CD4-positive, alpha-beta memory T cell (primary cell): ENCODE measurements at regions of chr6 and their contacts with region 1.

Region 1: DNA sequence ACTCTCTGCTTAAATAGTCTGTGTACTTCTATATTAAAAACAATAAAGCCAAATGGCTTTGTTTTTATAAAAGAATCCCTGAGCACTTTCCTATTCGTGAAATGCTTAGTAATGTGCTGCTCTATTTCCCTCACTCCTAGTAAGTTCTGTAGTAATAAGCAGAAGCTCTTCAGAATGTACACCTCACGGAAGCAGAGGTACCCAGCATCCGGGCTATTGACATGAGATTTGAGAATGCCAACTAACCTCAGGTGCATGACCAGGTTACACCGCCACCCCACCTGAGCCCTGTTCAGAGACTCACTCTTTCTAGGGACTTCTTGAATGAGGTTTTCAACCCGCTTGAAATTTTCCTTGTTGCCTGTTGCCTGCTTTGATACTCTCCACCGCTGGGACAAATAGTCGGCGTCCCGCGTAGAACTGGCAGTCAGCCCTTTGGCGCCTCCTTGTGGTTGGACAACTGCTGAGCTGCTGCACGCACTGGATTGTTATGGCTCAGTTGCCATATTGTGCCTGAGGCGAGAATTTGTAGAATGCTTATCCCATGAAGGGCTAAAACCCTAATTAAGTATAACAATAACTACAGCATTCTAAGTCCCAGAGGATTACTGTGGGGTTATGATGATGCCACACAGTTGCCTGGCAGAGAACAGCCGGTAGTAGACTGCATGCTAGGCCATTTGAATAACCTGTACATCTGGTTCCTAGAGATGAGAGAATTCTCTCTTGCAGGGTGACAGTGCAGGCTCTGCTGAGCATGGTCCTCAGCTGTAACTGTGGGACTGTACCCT is 95.4 kb downstream of the KHDC1L start:
- DNase-seq: peak; percentile 64 to 72 (median 65)
- H3K4me3 ChIP-seq: no peak overlapping the region
- H3K4me3 Mint-ChIP-seq: peak overlapping the region; percentile 15 to 58 (median 38)
- H3K27ac ChIP-seq: no peak overlapping the region
- H3K27ac Mint-ChIP-seq: peak overlapping the region in 1 of 7 donors; percentile 57
- H3K4me1 ChIP-seq: no peaks in the 10 kb centered on the region
- H3K4me1 Mint-ChIP-seq: peaks cover 0 to 4% (median 2%) of the 10 kb centered on the region in 4 donors
- H3K27me3 ChIP-seq: no peaks in the 10 kb centered on the region
- H3K27me3 Mint-ChIP-seq: peaks cover 0 to 4% of the 10 kb centered on the region in 2 donors

Region 2: GRCh38 chr6:72411872-72412708 is 717.8 kb before region 1 on chr6:
- CTCF ChIA-PET with region 1: interaction called, 117 read pairs
- POLR2A ChIA-PET with region 1: no interaction called
- intact Hi-C with region 1: loop called (anchors 1 kb)
- DNase-seq: peak; percentile 65 to 85 (median 76)
- H3K4me3 ChIP-seq: no peak overlapping the region
- H3K4me3 Mint-ChIP-seq: no peak overlapping the region
- H3K27ac ChIP-seq: no peak overlapping the region
- H3K27ac Mint-ChIP-seq: no peak overlapping the region
- H3K4me1 ChIP-seq: no peaks in the 10 kb centered on the region
- H3K4me1 Mint-ChIP-seq: peaks cover 0 to 2% (median under 1%) of the 10 kb centered on the region in 4 donors
- H3K27me3 ChIP-seq: no peaks in the 10 kb centered on the region
- H3K27me3 Mint-ChIP-seq: peaks cover 3 to 7% of the 10 kb centered on the region in 2 donors

Region 3: DNA sequence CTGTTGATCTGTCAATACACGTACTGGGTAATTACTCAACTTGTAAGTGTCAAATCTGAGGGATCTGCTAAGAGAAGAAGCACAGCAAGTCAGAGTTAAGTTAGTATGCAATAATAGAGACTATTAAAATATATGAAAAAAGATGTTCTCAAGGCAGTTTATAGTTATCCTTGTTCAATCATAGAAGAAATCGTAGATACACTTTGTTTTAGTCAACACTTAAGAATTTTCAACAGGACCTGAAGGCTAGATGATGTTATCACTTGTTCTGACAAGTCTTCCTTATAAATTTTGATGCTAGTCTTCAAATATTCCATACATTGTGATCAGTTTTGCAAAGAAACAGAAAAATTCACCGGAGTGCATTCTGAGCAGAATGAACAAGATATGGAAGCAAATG is 599.1 kb before region 1 on chr6:
- CTCF ChIA-PET with region 1: no interaction called
- POLR2A ChIA-PET with region 1: no interaction called
- intact Hi-C with region 1: loop called (anchors 1 kb)
- DNase-seq: no peak
- H3K4me3 ChIP-seq: no peak overlapping the region
- H3K4me3 Mint-ChIP-seq: no peak overlapping the region
- H3K27ac ChIP-seq: no peak overlapping the region
- H3K27ac Mint-ChIP-seq: no peak overlapping the region
- H3K4me1 ChIP-seq: no peaks in the 10 kb centered on the region
- H3K4me1 Mint-ChIP-seq: no peaks in the 10 kb centered on the region
- H3K27me3 ChIP-seq: no peaks in the 10 kb centered on the region
- H3K27me3 Mint-ChIP-seq: peaks cover 2 to 11% of the 10 kb centered on the region in 2 donors

Region 4: DNA sequence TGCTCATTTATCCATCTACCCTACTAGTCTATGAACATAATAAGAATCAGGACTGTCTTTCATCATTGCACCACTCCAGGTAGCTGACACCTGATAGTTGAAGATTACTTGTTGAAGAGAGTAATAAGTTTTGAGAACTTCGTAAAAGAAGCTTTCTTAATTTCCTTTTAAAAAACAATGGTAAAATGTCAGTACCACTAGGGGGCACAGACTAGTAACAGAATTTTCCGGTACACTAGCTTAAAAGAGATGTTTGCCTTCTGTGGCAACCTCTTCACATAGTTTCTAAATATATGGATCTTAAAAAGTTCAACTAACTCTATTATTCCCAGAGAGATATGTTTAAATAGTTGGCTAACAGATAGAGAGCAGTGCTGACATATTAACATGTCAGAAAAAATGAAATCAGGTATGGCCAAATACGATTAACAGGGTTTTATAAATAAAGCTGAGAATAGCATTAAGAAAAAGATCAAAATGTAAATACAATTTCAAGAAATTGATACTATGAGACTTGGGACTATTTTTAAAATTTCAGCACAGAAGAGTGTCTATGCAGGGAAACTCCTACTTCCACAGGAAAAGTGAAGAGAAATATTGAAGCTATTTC is 513.3 kb before region 1 on chr6:
- CTCF ChIA-PET with region 1: interaction called, 195 read pairs
- POLR2A ChIA-PET with region 1: no interaction called
- intact Hi-C with region 1: loop called (anchors 1 kb)
- DNase-seq: peak in 4 of 5 donors; percentile 8 to 32 (median 22)
- H3K4me3 ChIP-seq: no peak overlapping the region
- H3K4me3 Mint-ChIP-seq: no peak overlapping the region
- H3K27ac ChIP-seq: no peak overlapping the region
- H3K27ac Mint-ChIP-seq: peak overlapping the region in 2 of 7 donors; percentile 14 to 36
- H3K4me1 ChIP-seq: peaks cover 36% of the 10 kb centered on the region
- H3K4me1 Mint-ChIP-seq: peaks cover 20 to 41% (median 29%) of the 10 kb centered on the region in 4 donors
- H3K27me3 ChIP-seq: no peaks in the 10 kb centered on the region
- H3K27me3 Mint-ChIP-seq: no peaks in the 10 kb centered on the region

Region 5: DNA sequence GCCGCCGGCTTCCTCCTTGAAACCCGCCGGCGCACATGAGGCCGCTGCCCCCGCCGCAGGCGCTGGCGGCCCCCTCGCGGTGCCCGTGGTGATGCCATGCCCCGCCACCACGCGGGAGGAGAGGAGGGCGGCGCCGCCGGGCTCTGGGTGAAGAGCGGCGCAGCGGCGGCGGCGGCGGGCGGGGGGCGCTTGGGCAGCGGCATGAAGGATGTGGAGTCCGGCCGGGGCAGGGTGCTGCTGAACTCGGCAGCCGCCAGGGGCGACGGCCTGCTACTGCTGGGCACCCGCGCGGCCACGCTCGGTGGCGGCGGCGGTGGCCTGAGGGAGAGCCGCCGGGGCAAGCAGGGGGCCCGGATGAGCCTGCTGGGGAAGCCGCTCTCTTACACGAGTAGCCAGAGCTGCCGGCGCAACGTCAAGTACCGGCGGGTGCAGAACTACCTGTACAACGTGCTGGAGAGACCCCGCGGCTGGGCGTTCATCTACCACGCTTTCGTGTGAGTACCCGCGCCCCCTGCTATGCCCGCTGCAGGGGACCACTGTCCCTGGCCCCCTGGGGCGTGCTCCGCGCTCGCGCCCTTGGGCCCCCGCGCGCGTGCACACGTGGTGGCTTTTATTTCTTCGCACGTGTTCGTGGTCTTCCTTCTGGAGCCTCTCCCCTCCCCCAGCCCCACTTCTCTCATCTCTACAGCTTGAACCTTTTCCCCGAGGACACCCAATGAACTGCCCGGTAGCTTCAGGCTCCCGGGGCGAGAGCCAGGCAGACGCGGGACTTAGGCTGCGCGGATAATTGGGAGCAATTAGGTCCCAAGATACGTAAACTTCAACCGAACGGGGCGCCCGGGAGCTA is 507.5 kb before region 1 on chr6:
- CTCF ChIA-PET with region 1: interaction called, 195 read pairs
- POLR2A ChIA-PET with region 1: no interaction called
- intact Hi-C with region 1: no loop called
- DNase-seq: peak; percentile 33 to 60 (median 43)
- H3K4me3 ChIP-seq: peak overlapping the region; percentile 30 to 65
- H3K4me3 Mint-ChIP-seq: peak overlapping the region; percentile 85 to 96 (median 91)
- H3K27ac ChIP-seq: no peak overlapping the region
- H3K27ac Mint-ChIP-seq: peak overlapping the region in 4 of 7 donors; percentile 55 to 89 (median 66)
- H3K4me1 ChIP-seq: peaks cover 32% of the 10 kb centered on the region
- H3K4me1 Mint-ChIP-seq: peaks cover 21 to 43% (median 30%) of the 10 kb centered on the region in 4 donors
- H3K27me3 ChIP-seq: no peaks in the 10 kb centered on the region
- H3K27me3 Mint-ChIP-seq: no peaks in the 10 kb centered on the region

Region 6: DNA sequence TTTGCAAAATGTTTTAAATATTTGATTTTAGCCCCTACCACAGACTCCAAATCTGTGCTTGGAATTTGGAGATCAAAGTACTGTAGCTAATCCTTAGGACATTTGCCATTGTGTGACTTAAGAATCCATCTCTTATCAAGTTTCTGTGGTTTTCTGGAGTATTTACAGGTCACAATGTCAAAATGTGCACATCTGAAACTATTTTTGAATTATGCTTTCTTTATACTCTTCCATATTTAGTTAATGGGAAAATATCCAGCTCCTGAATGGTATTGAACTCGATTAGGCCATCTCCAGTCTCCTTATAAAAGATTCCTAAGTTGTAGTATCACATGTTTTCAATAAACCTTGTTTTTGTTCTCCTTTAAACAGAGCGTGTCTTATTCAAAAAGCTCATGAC is 67.0 kb before region 1 on chr6:
- CTCF ChIA-PET with region 1: no interaction called
- POLR2A ChIA-PET with region 1: no interaction called
- intact Hi-C with region 1: no loop called
- DNase-seq: no peak
- H3K4me3 ChIP-seq: no peak overlapping the region
- H3K4me3 Mint-ChIP-seq: no peak overlapping the region
- H3K27ac ChIP-seq: no peak overlapping the region
- H3K27ac Mint-ChIP-seq: no peak overlapping the region
- H3K4me1 ChIP-seq: no peaks in the 10 kb centered on the region
- H3K4me1 Mint-ChIP-seq: no peaks in the 10 kb centered on the region
- H3K27me3 ChIP-seq: no peaks in the 10 kb centered on the region
- H3K27me3 Mint-ChIP-seq: no peaks in the 10 kb centered on the region

Region 7: DNA sequence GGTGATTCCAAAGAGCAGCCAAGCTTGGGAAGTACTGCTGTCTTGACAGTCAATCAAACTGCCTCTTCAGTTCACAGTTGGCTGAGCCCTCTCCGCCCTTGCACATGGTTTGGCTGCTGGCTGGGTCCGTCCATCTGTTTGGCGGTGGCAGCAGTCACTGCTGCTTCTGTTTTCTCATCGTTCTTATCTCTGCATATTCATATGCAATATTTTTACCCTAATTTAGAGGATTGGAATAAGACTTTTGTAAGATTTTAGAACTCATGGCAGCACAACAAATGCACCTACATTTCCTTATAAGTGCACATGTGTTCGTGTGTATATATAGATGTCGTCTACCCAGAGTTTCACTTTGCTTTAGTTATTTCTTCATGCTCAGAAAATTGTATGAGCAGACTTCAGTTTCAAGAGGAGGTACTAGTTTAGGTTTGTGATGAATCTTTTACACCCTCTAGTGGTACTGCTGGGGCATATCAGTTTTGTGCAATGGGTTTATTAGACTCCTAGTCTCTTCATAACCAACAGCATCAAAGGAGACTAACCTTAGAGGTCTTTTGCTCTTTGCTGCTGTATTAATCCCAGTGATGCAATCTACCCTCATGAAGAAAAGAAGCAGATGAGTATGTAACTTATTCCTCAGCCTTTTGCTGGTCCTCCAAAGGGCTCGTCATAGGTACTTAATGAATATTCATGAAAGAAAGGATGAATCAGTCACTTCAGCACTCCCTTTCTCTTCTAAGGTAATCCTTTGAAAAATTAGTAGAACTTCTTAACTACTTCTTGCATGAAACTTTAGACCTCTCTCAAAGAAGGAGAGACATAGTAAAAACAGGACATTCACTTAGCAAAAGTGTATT is 51.1 kb after region 1 on chr6:
- CTCF ChIA-PET with region 1: no interaction called
- POLR2A ChIA-PET with region 1: no interaction called
- intact Hi-C with region 1: loop called (anchors 1 kb)
- DNase-seq: peak; percentile 32 to 46 (median 43)
- H3K4me3 ChIP-seq: no peak overlapping the region
- H3K4me3 Mint-ChIP-seq: peak overlapping the region in 7 of 8 donors; percentile 0 to 61 (median 45)
- H3K27ac ChIP-seq: no peak overlapping the region
- H3K27ac Mint-ChIP-seq: no peak overlapping the region
- H3K4me1 ChIP-seq: no peaks in the 10 kb centered on the region
- H3K4me1 Mint-ChIP-seq: peaks cover 0 to 5% (median 4%) of the 10 kb centered on the region in 4 donors
- H3K27me3 ChIP-seq: no peaks in the 10 kb centered on the region
- H3K27me3 Mint-ChIP-seq: peaks cover 2 to 3% of the 10 kb centered on the region in 2 donors

Region 8: GRCh38 chr6:74971633-74972032 is 1841.8 kb after region 1 on chr6:
- CTCF ChIA-PET with region 1: no interaction called
- POLR2A ChIA-PET with region 1: no interaction called
- intact Hi-C with region 1: no loop called
- DNase-seq: no peak
- H3K4me3 ChIP-seq: no peak overlapping the region
- H3K4me3 Mint-ChIP-seq: no peak overlapping the region
- H3K27ac ChIP-seq: no peak overlapping the region
- H3K27ac Mint-ChIP-seq: peak overlapping the region in 1 of 7 donors; percentile 48
- H3K4me1 ChIP-seq: no peaks in the 10 kb centered on the region
- H3K4me1 Mint-ChIP-seq: no peaks in the 10 kb centered on the region
- H3K27me3 ChIP-seq: no peaks in the 10 kb centered on the region
- H3K27me3 Mint-ChIP-seq: no peaks in the 10 kb centered on the region